ENCODE measurements at regions of chr1 and their contacts with region 1.

Region 1: GRCh38 chr1:35443768-35444518 is 113.3 kb downstream of the KIAA0319L start:
- DNase-seq: no peak
- CTCF ChIP-seq: no peak

Region 2: GRCh38 chr1:35001743-35002142 is 442.2 kb before region 1 on chr1:
- CTCF ChIA-PET with region 1: no interaction called
- POLR2A ChIA-PET with region 1: no interaction called
- DNase-seq: no peak
- CTCF ChIP-seq: no peak

Region 3: GRCh38 chr1:35229587-35230360 is 214.2 kb before region 1 on chr1:
- CTCF ChIA-PET with region 1: no interaction called
- POLR2A ChIA-PET with region 1: no interaction called
- DNase-seq: no peak
- CTCF ChIP-seq: no peak

Region 4: GRCh38 chr1:35264871-35265270 is 179.1 kb before region 1 on chr1:
- CTCF ChIA-PET with region 1: no interaction called
- POLR2A ChIA-PET with region 1: no interaction called
- DNase-seq: no peak
- CTCF ChIP-seq: no peak

Region 5: DNA sequence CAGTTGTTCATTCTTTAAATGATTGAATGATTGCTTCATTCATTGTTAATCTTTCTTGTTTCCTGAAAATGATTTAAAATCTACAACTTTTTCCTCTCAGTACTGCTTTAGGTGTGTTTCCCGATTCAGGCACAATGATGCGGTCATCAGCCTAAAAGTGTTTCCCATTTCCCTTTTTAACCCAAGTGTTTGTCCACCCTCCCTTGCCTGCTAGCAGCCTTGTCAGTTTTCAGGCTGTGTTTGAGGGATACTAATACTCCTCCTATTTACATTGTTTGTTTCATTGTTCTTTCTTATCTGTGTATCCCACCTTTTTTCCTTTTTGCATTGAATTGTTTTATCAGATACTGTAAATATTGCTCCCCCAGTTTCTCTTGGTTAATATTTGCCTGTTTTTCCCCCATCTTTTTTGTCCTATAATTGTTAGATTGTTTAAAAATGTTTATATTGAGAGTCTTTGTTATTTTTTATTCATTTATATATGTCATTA is 17.8 kb before region 1 on chr1:
- CTCF ChIA-PET with region 1: no interaction called
- POLR2A ChIA-PET with region 1: no interaction called
- DNase-seq: no peak
- CTCF ChIP-seq: no peak

Region 6: DNA sequence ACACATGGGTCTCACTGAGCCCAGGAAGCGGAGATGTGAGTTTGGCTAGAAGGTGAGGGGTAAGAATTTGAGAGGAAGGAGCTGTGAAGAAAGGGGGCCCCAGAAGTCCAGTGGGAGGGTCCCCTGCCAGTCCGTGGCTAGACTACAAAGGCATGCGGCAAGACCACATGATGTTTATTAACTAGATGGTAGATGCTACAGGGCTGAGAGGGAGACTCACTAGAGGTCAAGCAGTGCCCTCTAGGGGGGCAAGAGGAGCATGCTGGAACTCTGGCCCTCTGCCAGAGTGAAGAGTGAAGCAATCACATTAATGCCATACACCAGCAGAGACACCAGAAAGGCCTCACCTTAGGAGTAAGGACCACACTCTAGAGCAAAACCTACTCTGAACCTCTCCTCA is 101.0 kb after region 1 on chr1:
- CTCF ChIA-PET with region 1: interaction called, 72 read pairs
- POLR2A ChIA-PET with region 1: no interaction called
- DNase-seq: peak; percentile 54
- CTCF ChIP-seq: peak; percentile 53

Measured in GM10248 (cell line).